CD4-positive, alpha-beta memory T cell (primary cell): ENCODE measurements at regions of chr13 and their contacts with region 1.

Region 1: GRCh38 chr13:73984949-73985691 is 149.1 kb downstream of the KLF12 start:
- DNase-seq: peak; percentile 74 to 90 (median 82)
- H3K4me3 ChIP-seq: peak overlapping the region; percentile 34 to 46
- H3K4me3 Mint-ChIP-seq: peak overlapping the region; percentile 65 to 89 (median 80)
- H3K27ac ChIP-seq: peak overlapping the region; percentile 42
- H3K27ac Mint-ChIP-seq: peak overlapping the region in 4 of 7 donors; percentile 93 to 95 (median 94)
- H3K4me1 ChIP-seq: peaks cover 76% of the 10 kb centered on the region
- H3K4me1 Mint-ChIP-seq: peaks cover 35 to 50% (median 47%) of the 10 kb centered on the region in 4 donors
- H3K27me3 ChIP-seq: no peaks in the 10 kb centered on the region
- H3K27me3 Mint-ChIP-seq: no peaks in the 10 kb centered on the region

Region 2: DNA sequence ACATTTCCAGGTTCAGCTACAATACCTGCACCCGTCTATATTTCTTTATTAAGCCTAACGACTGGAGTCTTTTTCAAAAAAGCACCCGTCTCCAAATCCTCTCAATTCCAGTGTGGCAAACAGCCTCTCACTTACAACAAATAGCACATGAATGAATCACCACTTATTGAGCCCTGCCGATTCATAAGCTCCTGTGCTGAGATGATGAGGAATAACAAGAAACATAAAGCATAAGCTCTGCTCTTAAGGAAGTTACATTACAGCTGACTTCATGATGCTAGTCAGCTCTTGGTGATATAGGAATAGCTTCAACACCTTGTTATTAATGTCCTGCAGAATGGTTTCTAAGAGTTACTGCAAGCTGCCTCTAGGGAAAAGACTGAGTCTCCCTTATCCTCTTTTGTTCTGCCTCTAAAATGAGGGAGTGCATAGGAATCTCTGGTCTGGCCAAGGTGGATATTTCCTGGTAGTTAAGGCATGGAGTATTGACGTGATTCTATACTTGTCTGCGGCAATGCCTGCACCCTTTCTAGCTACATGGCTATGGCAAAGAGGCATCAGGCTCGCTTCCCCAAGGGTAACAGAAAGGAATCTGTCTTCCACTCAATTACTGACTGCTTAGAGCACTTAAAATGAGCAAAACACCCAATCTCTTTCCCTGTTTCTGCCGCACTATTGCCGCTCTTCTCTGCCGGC is 46.6 kb before region 1 on chr13:
- CTCF ChIA-PET with region 1: no interaction called
- POLR2A ChIA-PET with region 1: no interaction called
- intact Hi-C with region 1: loop called (anchors 5 kb)
- DNase-seq: no peak
- H3K4me3 ChIP-seq: no peak overlapping the region
- H3K4me3 Mint-ChIP-seq: no peak overlapping the region
- H3K27ac ChIP-seq: no peak overlapping the region
- H3K27ac Mint-ChIP-seq: peak overlapping the region in 4 of 7 donors; percentile 8 to 46 (median 28)
- H3K4me1 ChIP-seq: peaks cover 44% of the 10 kb centered on the region
- H3K4me1 Mint-ChIP-seq: peaks cover 61 to 88% (median 76%) of the 10 kb centered on the region in 4 donors
- H3K27me3 ChIP-seq: no peaks in the 10 kb centered on the region
- H3K27me3 Mint-ChIP-seq: no peaks in the 10 kb centered on the region

Region 3: GRCh38 chr13:73998631-73999030 is 13.5 kb after region 1 on chr13:
- CTCF ChIA-PET with region 1: interaction called, 6 read pairs
- POLR2A ChIA-PET with region 1: interaction called, 6 read pairs
- intact Hi-C with region 1: loop called (anchors 2 kb)
- DNase-seq: no peak
- H3K4me3 ChIP-seq: no peak overlapping the region
- H3K4me3 Mint-ChIP-seq: peak overlapping the region in 3 of 8 donors; percentile 17 to 66 (median 26)
- H3K27ac ChIP-seq: no peak overlapping the region
- H3K27ac Mint-ChIP-seq: peak overlapping the region in 3 of 7 donors; percentile 65 to 67 (median 66)
- H3K4me1 ChIP-seq: peaks cover 33% of the 10 kb centered on the region
- H3K4me1 Mint-ChIP-seq: peaks cover 52 to 86% (median 70%) of the 10 kb centered on the region in 4 donors
- H3K27me3 ChIP-seq: no peaks in the 10 kb centered on the region
- H3K27me3 Mint-ChIP-seq: no peaks in the 10 kb centered on the region

Region 4: GRCh38 chr13:74026753-74027152 is 41.6 kb after region 1 on chr13:
- CTCF ChIA-PET with region 1: interaction called, 3 read pairs
- POLR2A ChIA-PET with region 1: interaction called, 4 read pairs
- intact Hi-C with region 1: loop called (anchors 5 kb)
- DNase-seq: peak; percentile 63 to 88 (median 68)
- H3K4me3 ChIP-seq: peak overlapping the region in 1 of 2 donors; percentile 36
- H3K4me3 Mint-ChIP-seq: peak overlapping the region; percentile 79 to 93 (median 86)
- H3K27ac ChIP-seq: peak overlapping the region; percentile 54
- H3K27ac Mint-ChIP-seq: peak overlapping the region; percentile 87 to 97 (median 94)
- H3K4me1 ChIP-seq: peaks cover 83% of the 10 kb centered on the region
- H3K4me1 Mint-ChIP-seq: peaks cover 71 to 91% (median 81%) of the 10 kb centered on the region in 4 donors
- H3K27me3 ChIP-seq: no peaks in the 10 kb centered on the region
- H3K27me3 Mint-ChIP-seq: no peaks in the 10 kb centered on the region

Region 5: DNA sequence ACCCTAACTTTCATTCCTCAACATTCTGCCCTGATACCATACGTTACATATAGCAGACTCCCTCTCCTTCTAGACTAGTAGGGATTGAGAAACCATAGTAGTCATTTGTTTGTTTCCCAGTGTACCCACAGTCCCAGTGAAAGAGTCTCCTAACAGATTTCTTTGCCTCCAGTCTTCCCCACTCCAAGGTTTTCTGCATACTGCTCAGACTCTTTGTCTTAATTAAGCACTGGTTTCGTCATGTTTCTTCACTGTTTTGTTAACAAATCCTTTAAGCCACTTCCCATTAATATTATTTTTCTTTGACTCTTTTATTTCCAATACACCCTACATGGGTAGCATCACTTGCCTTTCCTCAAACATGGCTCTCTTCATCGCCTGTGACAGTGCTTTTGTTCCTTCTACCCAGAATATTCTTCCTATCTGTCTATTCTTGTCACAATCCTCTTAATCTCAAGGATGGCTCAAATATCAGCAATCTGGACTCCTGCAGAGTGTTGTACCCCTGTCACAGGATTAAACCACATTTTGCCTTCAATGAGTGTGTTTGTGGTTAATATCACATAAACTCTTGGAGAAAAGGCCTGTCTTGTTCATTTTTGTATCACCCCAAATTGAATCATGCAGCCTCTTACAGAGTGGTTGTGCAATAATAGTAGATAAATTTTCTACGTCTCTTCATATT is 241.8 kb after region 1 on chr13:
- CTCF ChIA-PET with region 1: interaction called, 3 read pairs
- POLR2A ChIA-PET with region 1: no interaction called
- intact Hi-C with region 1: loop called (anchors 1 kb)
- DNase-seq: no peak
- H3K4me3 ChIP-seq: no peak overlapping the region
- H3K4me3 Mint-ChIP-seq: no peak overlapping the region
- H3K27ac ChIP-seq: no peak overlapping the region
- H3K27ac Mint-ChIP-seq: no peak overlapping the region
- H3K4me1 ChIP-seq: peaks cover 24% of the 10 kb centered on the region
- H3K4me1 Mint-ChIP-seq: peaks cover 14 to 31% (median 20%) of the 10 kb centered on the region in 4 donors
- H3K27me3 ChIP-seq: no peaks in the 10 kb centered on the region
- H3K27me3 Mint-ChIP-seq: no peaks in the 10 kb centered on the region